ENCODE measurements at regions of chr20 and their contacts with region 1.

Region 1: DNA sequence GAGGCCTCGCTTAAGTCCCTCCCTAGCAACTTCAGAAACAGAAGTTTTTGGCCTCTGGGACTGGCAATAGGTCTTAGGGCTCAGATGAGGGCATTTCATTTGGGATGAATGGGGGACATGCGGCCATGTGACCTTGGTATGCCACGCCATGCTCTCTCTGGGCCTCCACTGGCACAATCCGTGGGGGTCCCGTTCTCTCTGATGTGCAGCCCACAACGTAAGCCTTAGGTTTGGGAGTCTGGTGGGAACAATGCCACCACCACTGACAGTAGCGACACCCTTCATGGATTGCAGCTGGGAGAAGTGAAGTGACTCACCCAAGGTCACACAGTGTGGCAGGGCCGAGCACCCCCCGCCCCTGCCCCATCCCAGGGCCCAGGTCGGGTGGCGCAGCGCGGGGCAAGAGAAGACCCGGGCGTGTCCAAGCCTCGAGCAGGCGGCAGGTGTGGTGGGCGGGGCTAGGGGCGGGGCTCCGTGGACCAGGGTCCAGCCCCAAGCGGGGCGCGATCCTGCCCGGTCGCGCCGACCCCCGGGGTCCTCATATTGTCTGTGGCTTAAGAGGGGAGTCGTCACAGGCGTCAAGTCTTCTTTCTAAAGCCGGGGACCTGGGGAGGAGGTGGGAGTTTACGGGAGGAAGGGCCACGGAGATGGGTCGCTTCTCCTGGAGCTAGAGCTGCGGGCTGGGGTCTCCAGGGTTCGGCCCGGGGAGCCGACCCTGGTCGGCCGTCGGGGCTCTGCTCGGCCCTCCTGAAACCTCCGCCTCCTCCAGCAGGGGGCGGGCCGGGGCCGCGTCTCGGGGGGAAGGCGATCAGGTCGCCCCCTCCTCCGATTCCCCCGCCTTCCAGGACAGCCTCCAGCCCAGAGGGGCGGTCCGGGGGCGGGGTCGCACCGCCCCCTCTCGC is 698 bp upstream of the CEBPB start:
- DNase-seq: peak; percentile 94 to 97
- ATAC-seq: peak; percentile 86
- H3K4me3 ChIP-seq: peak overlapping the region; percentile 87 to 88
- H3K27ac ChIP-seq: peak overlapping the region; percentile 19 to 91
- H3K4me1 ChIP-seq: no peaks in the 10 kb centered on the region
- H3K27me3 ChIP-seq: no peaks in the 10 kb centered on the region

Region 2: GRCh38 chr20:50110141-50110925 is 79.6 kb before region 1 on chr20:
- intact Hi-C with region 1: no loop called
- DNase-seq: no peak
- ATAC-seq: no peak
- H3K4me3 ChIP-seq: no peak overlapping the region
- H3K27ac ChIP-seq: no peak overlapping the region
- H3K4me1 ChIP-seq: peaks cover 0 to 8% of the 10 kb centered on the region in 2 donors
- H3K27me3 ChIP-seq: no peaks in the 10 kb centered on the region

Region 3: DNA sequence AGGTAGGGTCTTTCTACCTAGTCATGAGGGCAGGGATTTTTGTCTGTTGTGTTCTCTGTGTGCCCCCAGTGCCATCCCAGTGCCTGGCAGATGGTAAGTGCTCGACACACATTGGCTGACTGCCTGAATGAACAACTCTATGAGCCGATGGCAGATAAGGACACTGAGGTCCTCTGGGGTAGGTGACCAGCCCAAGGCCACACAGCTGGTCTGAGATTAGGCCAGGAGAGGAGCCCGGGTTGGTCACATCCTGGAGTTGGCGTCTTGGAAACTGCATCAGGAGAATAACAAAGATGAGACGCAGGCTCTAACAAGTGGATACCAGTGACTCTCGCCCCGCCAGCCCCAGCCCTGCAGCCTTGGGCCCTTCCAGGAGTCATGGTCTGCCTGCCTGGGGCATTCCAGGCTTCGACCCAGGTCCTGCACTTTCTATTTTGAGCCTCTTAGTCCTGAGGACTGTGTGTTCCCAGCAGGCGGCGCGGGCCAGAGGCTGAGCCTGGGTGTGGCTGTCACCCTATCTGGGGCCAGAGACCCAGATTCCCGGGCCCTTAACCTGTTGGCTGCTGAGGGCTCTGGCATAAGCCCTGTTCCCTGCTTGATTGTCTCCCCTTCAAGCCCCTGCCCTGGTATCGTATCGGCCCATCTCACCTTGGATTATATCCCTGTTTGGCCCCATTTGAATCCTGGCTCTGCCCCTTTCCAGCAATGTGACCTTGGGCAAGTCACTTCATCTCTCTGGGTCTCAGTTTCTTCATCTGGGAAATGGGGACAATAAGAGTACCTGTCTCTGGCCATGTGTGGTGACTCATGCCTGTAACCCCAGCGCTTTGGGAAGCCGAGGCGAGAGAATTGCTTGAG is 89.0 kb after region 1 on chr20:
- intact Hi-C with region 1: loop called in 1 of 2 experiments (anchors 10 kb)
- DNase-seq: peak; percentile 82 to 92
- ATAC-seq: peak; percentile 68
- H3K4me3 ChIP-seq: no peak overlapping the region
- H3K27ac ChIP-seq: peak overlapping the region in 1 of 2 donors; percentile 55
- H3K4me1 ChIP-seq: no peaks in the 10 kb centered on the region
- H3K27me3 ChIP-seq: no peaks in the 10 kb centered on the region

Region 4: DNA sequence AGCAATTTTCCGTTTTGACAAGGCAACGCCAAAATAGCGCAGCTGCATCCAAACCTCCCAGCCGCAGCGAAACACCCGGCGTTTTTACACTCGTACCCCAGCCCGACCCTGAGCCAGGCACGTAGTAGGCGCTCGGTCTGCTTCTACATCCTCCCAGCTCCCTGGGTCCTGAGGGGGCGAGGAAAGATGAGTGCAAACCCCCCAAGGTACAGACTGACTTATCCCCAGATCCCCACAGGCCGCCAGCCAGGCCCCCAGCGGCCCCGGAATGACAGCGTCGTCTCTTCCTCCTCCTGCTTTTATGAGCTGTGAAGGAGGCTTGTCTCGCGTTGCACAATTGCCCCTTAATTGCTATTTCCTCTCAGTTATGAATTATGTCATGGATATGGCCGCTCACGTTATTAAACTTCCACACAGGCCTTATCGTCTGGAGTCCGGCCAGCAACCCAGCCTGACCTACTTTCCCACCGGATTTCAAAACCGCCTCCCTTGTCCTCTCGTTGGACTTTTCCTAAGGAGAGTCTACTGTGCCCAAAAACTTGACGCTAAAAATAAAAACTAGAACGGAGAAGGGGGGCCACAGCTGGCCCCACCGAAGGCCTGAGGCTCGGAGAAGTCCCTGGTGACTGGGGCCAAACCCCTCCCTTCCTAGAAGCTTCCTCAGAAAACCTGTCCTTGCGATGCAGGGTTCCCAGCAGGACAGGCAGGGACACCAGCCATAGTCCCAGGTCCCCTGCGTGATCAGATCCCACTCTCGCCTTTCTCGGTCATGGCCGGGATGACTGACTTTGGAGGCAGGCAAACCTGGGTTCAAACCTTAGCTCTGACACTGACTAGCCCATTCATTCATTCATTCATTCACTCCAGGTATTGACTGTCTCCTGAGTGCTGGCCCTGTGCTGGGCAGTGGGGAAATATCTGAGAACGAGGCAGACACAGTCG is 189.4 kb after region 1 on chr20:
- intact Hi-C with region 1: loop called in 1 of 2 experiments (anchors 5 kb)
- DNase-seq: peak; percentile 94
- ATAC-seq: peak; percentile 90
- H3K4me3 ChIP-seq: no peak overlapping the region
- H3K27ac ChIP-seq: peak overlapping the region in 1 of 2 donors; percentile 58
- H3K4me1 ChIP-seq: no peaks in the 10 kb centered on the region
- H3K27me3 ChIP-seq: no peaks in the 10 kb centered on the region

Region 5: GRCh38 chr20:50460460-50461267 is 270.7 kb after region 1 on chr20:
- intact Hi-C with region 1: loop called (anchors 1 to 2 kb)
- DNase-seq: peak; percentile 92 to 97
- ATAC-seq: peak; percentile 95
- H3K4me3 ChIP-seq: no peak overlapping the region
- H3K27ac ChIP-seq: no peak overlapping the region
- H3K4me1 ChIP-seq: no peaks in the 10 kb centered on the region
- H3K27me3 ChIP-seq: no peaks in the 10 kb centered on the region

Region 6: DNA sequence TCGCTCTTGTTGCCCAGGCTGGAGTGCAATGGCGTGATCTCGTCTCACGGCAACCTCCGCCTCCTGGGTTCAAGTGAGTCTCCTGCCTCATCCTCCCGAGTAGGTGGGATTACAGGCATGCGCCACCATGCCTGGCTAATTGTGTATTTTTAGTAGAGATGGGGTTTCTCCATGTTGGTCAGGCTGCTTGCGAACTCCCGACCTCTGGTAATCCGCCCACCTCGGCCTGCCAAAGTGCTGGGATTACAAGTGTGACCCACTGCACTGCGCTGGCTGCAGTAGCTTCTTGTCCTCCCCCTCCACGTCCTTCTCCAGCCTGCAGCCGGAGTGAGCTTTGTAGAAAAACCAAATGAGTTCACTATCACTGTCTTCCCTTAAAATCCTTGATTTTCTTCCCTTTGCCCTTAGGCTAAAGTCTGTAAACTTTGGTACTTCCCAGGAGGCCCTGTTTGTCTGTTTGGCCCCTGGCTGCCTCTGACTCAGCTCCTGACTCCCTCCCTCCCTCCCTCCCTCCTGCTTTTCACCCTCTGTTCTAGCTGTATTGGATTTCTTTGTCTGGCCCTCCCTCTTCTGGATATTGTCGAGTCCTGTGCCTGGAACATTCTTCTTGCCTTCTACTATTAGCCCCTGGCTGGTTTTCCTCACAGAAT is 554.3 kb after region 1 on chr20:
- intact Hi-C with region 1: loop called (anchors 10 kb)
- DNase-seq: peak in 1 of 2 donors; percentile 71
- ATAC-seq: peak; percentile 91
- H3K4me3 ChIP-seq: no peak overlapping the region
- H3K27ac ChIP-seq: peak overlapping the region in 1 of 2 donors; percentile 75
- H3K4me1 ChIP-seq: no peaks in the 10 kb centered on the region
- H3K27me3 ChIP-seq: no peaks in the 10 kb centered on the region

Measured in aorta (tissue), 5 donors.